ENCODE measurements at regions of chr10 and their contacts with region 1.

Region 1: DNA sequence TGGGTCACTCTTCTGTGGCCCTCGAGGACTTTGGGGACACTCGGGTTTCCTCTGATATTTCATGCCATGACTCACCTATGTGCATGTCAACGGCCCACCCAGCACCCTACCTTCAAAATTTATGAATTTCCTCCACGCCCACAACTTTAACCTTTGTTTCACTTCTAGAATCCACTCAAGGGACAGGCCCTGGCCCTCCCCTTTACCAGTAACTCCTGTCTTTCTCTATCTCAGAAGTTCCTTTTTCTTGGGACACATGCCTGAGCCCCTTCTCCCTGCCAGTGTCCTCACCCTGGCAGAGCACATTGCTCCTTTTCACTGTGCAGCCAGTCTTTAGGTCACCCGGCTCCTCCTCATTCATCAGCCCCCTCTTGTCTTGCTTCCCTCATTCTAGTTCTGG is 282.5 kb upstream of the KLF6 start:
- DNase-seq: peak; percentile 75
- H3K4me3 ChIP-seq: peak overlapping the region in 1 of 4 donors; percentile 10
- H3K27ac ChIP-seq: peak overlapping the region; percentile 79 to 91 (median 85)
- H3K4me1 ChIP-seq: peaks cover 3 to 59% (median 41%) of the 10 kb centered on the region in 4 donors
- H3K27me3 ChIP-seq: no peaks in the 10 kb centered on the region
- CTCF ChIP-seq: no peak
- EP300 ChIP-seq: no peak
- POLR2A ChIP-seq: peak; percentile 58

Region 2: DNA sequence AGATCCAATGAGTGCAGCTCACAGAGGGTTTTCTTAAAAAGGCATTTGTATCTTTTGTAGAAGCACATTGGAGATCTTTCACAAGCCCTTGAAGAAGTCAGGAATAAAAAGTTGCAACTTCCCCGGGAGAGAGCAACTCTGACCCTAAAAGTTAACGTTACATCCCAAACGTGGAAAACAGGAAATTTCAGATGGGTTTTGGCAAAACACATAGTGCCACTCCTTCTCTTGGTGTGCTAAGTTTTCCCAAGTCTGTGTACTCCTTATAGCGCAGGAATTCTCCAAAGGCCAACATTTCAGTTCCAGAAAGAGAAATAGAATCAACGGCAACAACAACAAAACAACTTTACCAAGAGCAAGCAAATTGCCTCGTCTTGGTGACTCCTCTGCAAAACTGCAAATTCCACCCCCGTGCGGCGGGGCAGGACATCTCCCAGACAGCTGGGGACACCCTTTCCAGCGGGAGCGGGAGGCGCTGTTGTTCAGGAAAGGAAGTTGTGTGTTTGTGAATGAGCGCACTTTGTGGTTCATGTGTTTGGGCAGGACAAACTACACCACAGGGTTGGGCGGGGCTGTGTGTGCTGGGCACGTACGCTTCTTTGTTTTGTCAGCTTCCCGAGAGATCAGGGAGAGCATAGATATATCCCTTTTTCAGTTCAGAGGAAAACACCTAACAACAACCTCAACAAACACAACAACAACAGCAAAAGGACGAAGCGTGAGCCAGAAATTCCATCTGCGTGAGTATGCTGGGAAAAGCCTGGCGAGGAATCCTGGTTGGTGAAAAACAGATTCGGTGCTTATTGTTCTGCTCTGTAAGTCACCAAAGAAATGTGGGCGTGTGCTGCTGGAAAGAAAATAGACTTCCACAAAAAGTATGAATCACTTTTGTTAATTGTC is 600.2 kb before region 1 on chr10:
- in situ Hi-C with region 1: loop called in 1 of 4 experiments (anchors 25 kb)
- intact Hi-C with region 1: no loop called
- DNase-seq: peak; percentile 73
- H3K4me3 ChIP-seq: no peak overlapping the region
- H3K27ac ChIP-seq: peak overlapping the region; percentile 81 to 91 (median 86)
- H3K4me1 ChIP-seq: peaks cover 11 to 72% (median 46%) of the 10 kb centered on the region in 4 donors
- H3K27me3 ChIP-seq: no peaks in the 10 kb centered on the region
- CTCF ChIP-seq: peak in 2 of 5 experiments; percentile 13 to 28
- EP300 ChIP-seq: no peak
- POLR2A ChIP-seq: no peak

Region 3: GRCh38 chr10:4033341-4033896 is 34.1 kb before region 1 on chr10:
- in situ Hi-C with region 1: no loop called
- intact Hi-C with region 1: no loop called
- DNase-seq: no peak
- H3K4me3 ChIP-seq: no peak overlapping the region
- H3K27ac ChIP-seq: no peak overlapping the region
- H3K4me1 ChIP-seq: peaks cover 0 to 18% (median 4%) of the 10 kb centered on the region in 4 donors
- H3K27me3 ChIP-seq: no peaks in the 10 kb centered on the region
- CTCF ChIP-seq: no peak
- EP300 ChIP-seq: no peak
- POLR2A ChIP-seq: no peak

Region 4: DNA sequence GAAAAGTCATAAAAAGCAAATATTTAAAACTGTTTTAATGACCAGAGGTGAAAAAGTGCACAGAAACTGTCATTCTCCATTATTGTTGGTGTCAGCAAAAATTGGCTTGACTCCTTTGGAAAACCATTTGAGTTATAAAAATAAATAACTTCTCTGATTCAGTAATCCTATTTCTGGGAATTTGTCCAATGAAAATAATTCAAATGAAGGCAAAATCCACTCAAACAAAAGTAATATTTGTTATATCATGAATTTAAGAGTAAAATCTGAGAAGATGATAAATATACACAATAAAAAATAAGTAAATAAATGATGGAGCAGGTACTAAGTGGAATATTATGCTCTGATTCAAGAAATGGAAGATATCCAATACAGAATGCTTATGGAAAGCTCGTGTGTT is 44.1 kb after region 1 on chr10:
- in situ Hi-C with region 1: no loop called
- intact Hi-C with region 1: no loop called
- DNase-seq: no peak
- H3K4me3 ChIP-seq: no peak overlapping the region
- H3K27ac ChIP-seq: no peak overlapping the region
- H3K4me1 ChIP-seq: no peaks in the 10 kb centered on the region
- H3K27me3 ChIP-seq: no peaks in the 10 kb centered on the region
- CTCF ChIP-seq: no peak
- EP300 ChIP-seq: no peak
- POLR2A ChIP-seq: no peak

Region 5: GRCh38 chr10:4174197-4174596 is 106.7 kb after region 1 on chr10:
- in situ Hi-C with region 1: loop called in 1 of 4 experiments (anchors 25 kb)
- intact Hi-C with region 1: no loop called
- DNase-seq: no peak
- H3K4me3 ChIP-seq: no peak overlapping the region
- H3K27ac ChIP-seq: no peak overlapping the region
- H3K4me1 ChIP-seq: no peaks in the 10 kb centered on the region
- H3K27me3 ChIP-seq: no peaks in the 10 kb centered on the region
- CTCF ChIP-seq: no peak
- EP300 ChIP-seq: no peak
- POLR2A ChIP-seq: no peak

Region 6: GRCh38 chr10:4663162-4663904 is 595.8 kb after region 1 on chr10:
- in situ Hi-C with region 1: loop called in 2 of 4 experiments (anchors 25 kb)
- intact Hi-C with region 1: no loop called
- DNase-seq: peak; percentile 77
- H3K4me3 ChIP-seq: no peak overlapping the region
- H3K27ac ChIP-seq: peak overlapping the region; percentile 89 to 90 (median 90)
- H3K4me1 ChIP-seq: peaks cover 25 to 46% (median 33%) of the 10 kb centered on the region in 4 donors
- H3K27me3 ChIP-seq: no peaks in the 10 kb centered on the region
- CTCF ChIP-seq: no peak
- EP300 ChIP-seq: peak; percentile 96
- POLR2A ChIP-seq: peak; percentile 57

Measured in transverse colon (tissue), 4 donors.